Activated naive CD8-positive, alpha-beta T cell treated with anti-CD3 and anti-CD28 coated beads, Interleukin-2, amount 10 ng/mL, durations not matched to agents 7 days and 5 days (primary cell): ENCODE measurements at regions of chr6 and their contacts with region 1.

Region 1: DNA sequence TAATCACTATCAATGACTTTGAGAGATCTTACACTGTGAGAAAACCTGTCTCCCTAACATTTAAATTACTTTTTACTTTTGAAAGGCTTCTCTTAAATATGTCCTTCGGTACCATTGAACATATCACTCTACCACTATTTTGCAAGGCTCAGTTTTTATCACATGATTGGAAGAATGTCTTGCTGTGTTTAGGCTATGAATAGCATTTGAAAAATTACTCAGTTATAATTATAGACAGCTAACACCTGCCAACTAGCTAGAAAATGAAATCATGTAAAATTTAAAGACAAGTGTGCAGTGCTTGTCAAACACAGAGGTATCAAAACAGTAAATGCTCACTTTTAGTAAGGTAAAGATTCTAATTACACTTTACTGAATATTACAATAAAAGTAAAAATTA is 11.0 kb downstream of the SESN1 start:
- DNase-seq: no peak
- ATAC-seq: no peak
- H3K4me3 Mint-ChIP-seq: no peak overlapping the region
- H3K27ac Mint-ChIP-seq: no peak overlapping the region
- H3K4me1 Mint-ChIP-seq: peaks cover 2% of the 10 kb centered on the region
- H3K27me3 Mint-ChIP-seq: no peaks in the 10 kb centered on the region

Region 2: DNA sequence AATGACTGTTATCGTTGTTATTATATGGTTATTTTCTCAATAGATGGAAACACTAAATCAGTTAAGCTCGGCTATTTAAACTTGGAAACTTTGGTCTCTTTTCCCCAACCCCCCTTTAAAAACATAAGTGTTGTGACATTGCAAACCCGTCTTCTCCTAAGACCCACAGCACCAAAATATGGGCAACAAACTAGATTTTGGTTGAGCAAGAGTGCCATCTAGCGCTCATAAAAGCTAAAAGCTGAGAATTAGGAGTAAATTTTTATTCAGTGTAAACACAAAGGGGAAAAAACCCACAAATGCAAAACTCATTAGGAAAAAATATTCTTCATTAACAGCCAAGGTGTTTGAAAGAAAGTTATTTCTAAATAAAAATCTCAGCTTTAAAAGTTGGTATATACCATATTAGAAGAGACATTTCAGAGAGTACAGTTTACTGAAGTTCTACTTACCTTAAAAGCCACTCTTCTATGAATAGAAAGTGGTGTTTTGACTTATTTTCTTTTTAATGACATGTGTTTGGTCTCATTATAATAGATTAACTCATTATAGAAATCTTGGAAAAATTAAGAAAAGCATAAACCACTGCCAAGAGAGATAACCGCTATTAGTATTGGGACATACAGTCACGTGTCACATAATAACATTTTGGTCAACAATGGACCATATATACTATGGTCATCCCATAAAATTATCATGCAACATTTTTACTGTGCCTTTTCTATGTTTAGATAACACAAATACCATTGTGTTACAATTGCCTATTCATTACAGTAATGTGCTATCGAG is 10.1 kb before region 1 on chr6:
- POLR2A ChIA-PET with region 1: no interaction called
- DNase-seq: no peak
- ATAC-seq: peak; percentile 59
- H3K4me3 Mint-ChIP-seq: no peak overlapping the region
- H3K27ac Mint-ChIP-seq: no peak overlapping the region
- H3K4me1 Mint-ChIP-seq: peaks cover 16% of the 10 kb centered on the region
- H3K27me3 Mint-ChIP-seq: no peaks in the 10 kb centered on the region

Region 3: GRCh38 chr6:109095027-109095834 is 11.6 kb after region 1 on chr6 and contains the start of gene CEP57L1:
- POLR2A ChIA-PET with region 1: interaction called, 14 read pairs
- DNase-seq: peak; percentile 95
- ATAC-seq: peak; percentile 81
- H3K4me3 Mint-ChIP-seq: peak within 1 kb of the TSS; percentile 95
- H3K27ac Mint-ChIP-seq: peak within 1 kb of the TSS; percentile 99
- H3K4me1 Mint-ChIP-seq: peaks cover 45% of the 10 kb centered on the region
- H3K27me3 Mint-ChIP-seq: no peaks in the 10 kb centered on the region
- total RNA-seq, gene CEP57L1: 20.5 to 22.6 TPM

Region 4: DNA sequence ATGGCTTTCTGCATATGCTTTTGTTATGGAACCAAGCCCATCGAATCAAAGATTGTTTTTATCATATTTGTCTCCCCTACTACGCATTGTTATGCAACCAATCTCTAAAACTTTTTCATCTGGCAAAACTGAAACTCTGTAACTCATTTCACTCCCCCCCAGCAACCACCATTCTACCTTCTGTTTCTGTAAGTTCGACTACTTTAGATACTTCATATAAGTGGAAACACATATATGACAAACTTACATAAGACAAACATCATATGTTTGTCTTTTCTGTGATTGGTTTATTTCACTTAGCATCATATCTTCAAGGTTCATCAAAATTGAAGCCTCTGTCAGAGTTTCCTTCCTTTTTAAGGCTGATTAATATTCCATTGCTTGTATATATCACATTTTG is 46.4 kb after region 1 on chr6:
- POLR2A ChIA-PET with region 1: no interaction called
- DNase-seq: no peak
- ATAC-seq: no peak
- H3K4me3 Mint-ChIP-seq: no peak overlapping the region
- H3K27ac Mint-ChIP-seq: no peak overlapping the region
- H3K4me1 Mint-ChIP-seq: peaks cover 2% of the 10 kb centered on the region
- H3K27me3 Mint-ChIP-seq: no peaks in the 10 kb centered on the region

Region 5: GRCh38 chr6:109143191-109143590 is 59.5 kb after region 1 on chr6:
- POLR2A ChIA-PET with region 1: no interaction called
- DNase-seq: no peak
- ATAC-seq: no peak
- H3K4me3 Mint-ChIP-seq: no peak overlapping the region
- H3K27ac Mint-ChIP-seq: no peak overlapping the region
- H3K4me1 Mint-ChIP-seq: no peaks in the 10 kb centered on the region
- H3K27me3 Mint-ChIP-seq: no peaks in the 10 kb centered on the region